ENCODE measurements at regions of chr4 and their contacts with region 1.

Region 1: GRCh38 chr4:152585023-152585441 is 49.1 kb upstream of the FBXW7 start:
- DNase-seq: peak; percentile 15
- ATAC-seq: peak; percentile 53
- H3K4me3 ChIP-seq: peak overlapping the region in 2 of 5 experiments; percentile 16 to 38
- H3K4me3 Mint-ChIP-seq: peak overlapping the region; percentile 74
- H3K27ac ChIP-seq: peak overlapping the region; percentile 42 to 43
- H3K27ac Mint-ChIP-seq: peak overlapping the region; percentile 81
- H3K4me1 ChIP-seq: peaks cover 0 to 4% of the 10 kb centered on the region in 2 donors
- H3K4me1 Mint-ChIP-seq: peaks cover 14% of the 10 kb centered on the region
- H3K27me3 ChIP-seq: no peaks in the 10 kb centered on the region
- H3K27me3 Mint-ChIP-seq: no peaks in the 10 kb centered on the region
- CTCF ChIP-seq: no peak

Region 2: GRCh38 chr4:152424977-152425376 is 160.1 kb before region 1 on chr4:
- CTCF ChIA-PET with region 1: no interaction called
- POLR2A ChIA-PET with region 1: no interaction called
- intact Hi-C with region 1: no loop called
- DNase-seq: no peak
- ATAC-seq: no peak
- H3K4me3 ChIP-seq: no peak overlapping the region
- H3K4me3 Mint-ChIP-seq: no peak overlapping the region
- H3K27ac ChIP-seq: no peak overlapping the region
- H3K27ac Mint-ChIP-seq: no peak overlapping the region
- H3K4me1 ChIP-seq: no peaks in the 10 kb centered on the region
- H3K4me1 Mint-ChIP-seq: peaks cover 29% of the 10 kb centered on the region
- H3K27me3 ChIP-seq: no peaks in the 10 kb centered on the region
- H3K27me3 Mint-ChIP-seq: no peaks in the 10 kb centered on the region
- CTCF ChIP-seq: no peak

Region 3: DNA sequence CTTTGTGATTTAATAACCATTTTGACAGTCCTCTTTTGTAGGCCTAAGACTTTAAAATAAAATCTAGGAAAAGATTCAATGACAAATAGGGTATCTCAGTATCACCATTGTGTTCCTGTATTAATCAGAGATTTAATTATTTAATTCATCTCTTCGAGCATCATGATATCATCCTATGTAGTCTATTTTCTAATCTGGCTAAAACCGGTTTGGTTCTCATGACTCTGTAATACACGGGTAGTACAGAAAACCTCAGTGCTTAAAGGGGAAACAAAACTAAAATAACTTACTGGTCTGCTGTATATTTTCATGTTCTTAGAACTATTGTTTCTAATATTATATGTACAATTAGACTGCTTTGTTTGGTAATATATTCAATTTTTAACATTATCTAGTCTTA is 25.4 kb before region 1 on chr4:
- CTCF ChIA-PET with region 1: no interaction called
- POLR2A ChIA-PET with region 1: no interaction called
- intact Hi-C with region 1: loop called (anchors 5 kb)
- DNase-seq: no peak
- ATAC-seq: no peak
- H3K4me3 ChIP-seq: no peak overlapping the region
- H3K4me3 Mint-ChIP-seq: no peak overlapping the region
- H3K27ac ChIP-seq: no peak overlapping the region
- H3K27ac Mint-ChIP-seq: no peak overlapping the region
- H3K4me1 ChIP-seq: peaks cover 6% of the 10 kb centered on the region in 2 donors
- H3K4me1 Mint-ChIP-seq: peaks cover 39% of the 10 kb centered on the region
- H3K27me3 ChIP-seq: no peaks in the 10 kb centered on the region
- H3K27me3 Mint-ChIP-seq: no peaks in the 10 kb centered on the region
- CTCF ChIP-seq: no peak

Measured in B cell (primary cell).